Activated naive CD8-positive, alpha-beta T cell treated with anti-CD3 and anti-CD28 coated beads, Interleukin-2, amount 10 ng/mL, durations not matched to agents 7 days and 5 days (primary cell): ENCODE measurements at regions of chr16 and their contacts with region 1.

Region 1: DNA sequence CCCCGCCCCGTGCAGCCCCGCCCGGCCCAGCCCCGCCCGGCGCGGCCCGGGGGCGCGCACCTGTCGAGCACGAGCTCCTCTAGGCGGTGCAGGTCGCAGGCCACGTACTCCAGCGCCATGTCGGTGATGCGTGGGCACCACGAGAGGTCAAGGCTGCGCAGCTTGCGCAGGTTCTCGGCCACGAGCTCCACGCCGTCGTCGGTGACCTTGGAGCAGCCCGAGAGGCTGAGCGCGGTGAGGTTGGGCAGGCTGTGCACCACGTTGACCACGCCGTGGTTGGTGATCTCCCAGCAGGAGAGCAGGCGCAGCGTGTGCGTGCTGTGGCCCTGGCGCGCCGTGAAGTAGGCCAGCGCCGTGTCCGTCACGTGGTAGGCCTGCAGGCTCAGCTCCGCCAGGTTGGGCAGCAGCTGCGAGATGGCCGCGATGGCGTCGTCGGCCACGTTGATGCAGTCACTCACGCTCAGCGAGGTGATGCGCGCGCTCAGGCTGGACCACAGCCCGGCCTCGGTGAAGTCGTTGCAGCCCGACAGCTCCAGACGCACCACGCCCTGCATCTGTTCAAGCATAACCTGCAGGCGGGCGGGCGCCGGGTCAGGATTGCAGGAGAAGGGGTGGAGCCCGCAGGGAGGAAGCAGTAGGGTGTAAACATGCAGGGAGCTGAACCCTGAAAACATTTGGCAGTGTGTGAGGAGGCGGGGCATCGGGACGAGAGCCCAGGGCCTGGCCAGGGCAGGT is 5.3 kb upstream of the WDR24 start:
- DNase-seq: peak; percentile 82
- ATAC-seq: peak; percentile 70
- H3K4me3 Mint-ChIP-seq: peak overlapping the region; percentile 77
- H3K27ac Mint-ChIP-seq: peak overlapping the region; percentile 74
- H3K4me1 Mint-ChIP-seq: peaks cover 6% of the 10 kb centered on the region
- H3K27me3 Mint-ChIP-seq: peaks cover 15% of the 10 kb centered on the region

Region 2: DNA sequence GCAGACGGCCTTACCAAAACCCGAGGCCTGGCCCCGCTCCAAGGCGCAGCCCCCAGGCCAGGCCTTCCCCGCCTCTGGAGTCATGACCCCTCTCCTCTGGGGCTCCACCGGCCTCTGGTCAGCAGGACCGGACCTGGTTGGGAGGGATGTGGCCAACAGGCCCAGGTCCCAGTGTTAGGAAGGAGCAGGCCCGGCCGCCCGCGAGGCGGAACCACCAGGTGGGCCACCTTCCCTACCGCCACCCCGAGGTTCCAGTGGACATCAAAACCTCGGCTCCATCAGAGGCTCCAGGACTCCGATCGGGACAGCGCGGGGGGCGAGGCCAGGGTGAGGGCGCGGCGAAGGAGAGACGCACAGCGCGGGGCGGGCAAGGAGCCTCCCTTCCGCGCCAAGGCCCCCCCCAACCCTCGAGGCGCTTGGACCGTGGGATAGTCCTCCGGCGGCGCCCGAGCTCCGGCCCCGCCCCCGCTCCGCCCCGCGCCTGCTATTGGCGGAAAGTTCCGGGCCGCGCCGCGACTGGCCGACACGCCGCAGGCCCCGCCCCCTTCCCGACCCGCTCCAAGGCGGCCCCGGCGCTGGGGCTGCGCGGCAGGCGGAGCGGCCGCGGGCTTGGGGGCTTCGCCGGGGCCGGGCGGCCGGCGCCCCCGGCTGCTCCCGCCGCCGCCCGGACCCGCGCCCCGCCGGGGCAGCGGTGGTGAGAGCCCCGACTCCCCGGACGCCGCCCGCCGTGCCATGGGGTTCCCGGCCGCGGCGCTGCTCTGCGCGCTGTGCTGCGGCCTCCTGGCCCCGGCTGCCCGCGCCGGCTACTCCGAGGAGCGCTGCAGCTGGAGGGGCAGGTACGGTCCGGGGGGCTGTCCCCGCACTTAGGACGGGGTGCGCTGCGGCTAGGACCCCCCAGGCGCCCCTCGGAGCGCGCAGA is 19.3 kb after region 1 on chr16 and contains the start of gene METRN:
- POLR2A ChIA-PET with region 1: interaction called, 11 read pairs
- DNase-seq: peak; percentile 97
- ATAC-seq: peak; percentile 84
- H3K4me3 Mint-ChIP-seq: peak within 1 kb of the TSS; percentile 25
- H3K27ac Mint-ChIP-seq: no peak within 1 kb of the TSS
- H3K4me1 Mint-ChIP-seq: peaks cover 4% of the 10 kb centered on the region
- H3K27me3 Mint-ChIP-seq: peaks cover 14% of the 10 kb centered on the region
- total RNA-seq, gene METRN: 10.0 to 12.4 TPM

Region 3: GRCh38 chr16:720990-721764 is 25.7 kb after region 1 on chr16 and contains the start of gene ANTKMT:
- POLR2A ChIA-PET with region 1: interaction called, 11 read pairs
- DNase-seq: peak; percentile 86
- ATAC-seq: peak; percentile 68
- H3K4me3 Mint-ChIP-seq: peak within 1 kb of the TSS; percentile 78
- H3K27ac Mint-ChIP-seq: peak within 1 kb of the TSS; percentile 56
- H3K4me1 Mint-ChIP-seq: peaks cover 5% of the 10 kb centered on the region
- H3K27me3 Mint-ChIP-seq: peaks cover 3% of the 10 kb centered on the region
- total RNA-seq, gene ANTKMT: 21.6 to 23.2 TPM